Activated CD4-positive, alpha-beta memory T cell treated with anti-CD3 and anti-CD28 coated beads for 36 hours (primary cell): ENCODE measurements at regions of chr1 and their contacts with region 1.

Region 1: GRCh38 chr1:13730751-13731482 is 30.9 kb downstream of the PRDM2 start:
- DNase-seq: peak; percentile 92
- H3K4me3 Mint-ChIP-seq: peak overlapping the region; percentile 81
- H3K27ac Mint-ChIP-seq: peak overlapping the region; percentile 98
- H3K4me1 Mint-ChIP-seq: peaks cover 67% of the 10 kb centered on the region
- H3K27me3 Mint-ChIP-seq: no peaks in the 10 kb centered on the region

Region 2: DNA sequence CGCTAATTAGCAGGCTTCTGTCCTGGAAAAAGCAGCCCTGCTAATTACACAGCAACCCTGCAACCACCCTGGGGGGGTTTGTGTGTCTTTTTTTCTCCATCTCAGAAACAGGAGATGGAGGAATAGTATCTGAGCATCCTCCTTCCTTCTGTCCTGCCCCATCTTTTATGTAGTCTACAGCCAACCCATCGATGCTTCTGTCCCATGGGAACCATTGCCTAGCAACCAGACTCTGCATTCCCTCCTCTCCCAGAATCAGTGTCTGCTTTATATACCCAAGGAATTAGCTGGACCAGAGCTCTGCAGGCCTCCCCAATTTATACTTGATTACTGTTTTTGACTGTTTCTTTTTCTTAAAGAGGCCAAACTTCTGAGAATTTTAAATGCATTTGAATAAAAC is 252.2 kb before region 1 on chr1:
- CTCF ChIA-PET with region 1: no interaction called
- POLR2A ChIA-PET with region 1: no interaction called
- intact Hi-C with region 1: no loop called
- DNase-seq: no peak
- H3K4me3 Mint-ChIP-seq: no peak overlapping the region
- H3K27ac Mint-ChIP-seq: no peak overlapping the region
- H3K4me1 Mint-ChIP-seq: peaks cover 5% of the 10 kb centered on the region
- H3K27me3 Mint-ChIP-seq: peaks cover 5% of the 10 kb centered on the region

Region 3: GRCh38 chr1:13700521-13701270 is 30.2 kb before region 1 on chr1:
- CTCF ChIA-PET with region 1: interaction called, 28 read pairs
- POLR2A ChIA-PET with region 1: interaction called, 6 read pairs
- intact Hi-C with region 1: loop called (anchors 1 kb)
- DNase-seq: peak; percentile 54
- H3K4me3 Mint-ChIP-seq: peak overlapping the region; percentile 91
- H3K27ac Mint-ChIP-seq: peak overlapping the region; percentile 97
- H3K4me1 Mint-ChIP-seq: peaks cover 47% of the 10 kb centered on the region
- H3K27me3 Mint-ChIP-seq: no peaks in the 10 kb centered on the region

Region 4: GRCh38 chr1:13748610-13749505 is 17.9 kb after region 1 on chr1:
- CTCF ChIA-PET with region 1: interaction called, 11 read pairs
- POLR2A ChIA-PET with region 1: interaction called, 33 read pairs
- intact Hi-C with region 1: loop called (anchors 1 kb)
- DNase-seq: peak; percentile 96
- H3K4me3 Mint-ChIP-seq: peak overlapping the region; percentile 83
- H3K27ac Mint-ChIP-seq: peak overlapping the region; percentile 93
- H3K4me1 Mint-ChIP-seq: peaks cover 50% of the 10 kb centered on the region
- H3K27me3 Mint-ChIP-seq: no peaks in the 10 kb centered on the region

Region 5: DNA sequence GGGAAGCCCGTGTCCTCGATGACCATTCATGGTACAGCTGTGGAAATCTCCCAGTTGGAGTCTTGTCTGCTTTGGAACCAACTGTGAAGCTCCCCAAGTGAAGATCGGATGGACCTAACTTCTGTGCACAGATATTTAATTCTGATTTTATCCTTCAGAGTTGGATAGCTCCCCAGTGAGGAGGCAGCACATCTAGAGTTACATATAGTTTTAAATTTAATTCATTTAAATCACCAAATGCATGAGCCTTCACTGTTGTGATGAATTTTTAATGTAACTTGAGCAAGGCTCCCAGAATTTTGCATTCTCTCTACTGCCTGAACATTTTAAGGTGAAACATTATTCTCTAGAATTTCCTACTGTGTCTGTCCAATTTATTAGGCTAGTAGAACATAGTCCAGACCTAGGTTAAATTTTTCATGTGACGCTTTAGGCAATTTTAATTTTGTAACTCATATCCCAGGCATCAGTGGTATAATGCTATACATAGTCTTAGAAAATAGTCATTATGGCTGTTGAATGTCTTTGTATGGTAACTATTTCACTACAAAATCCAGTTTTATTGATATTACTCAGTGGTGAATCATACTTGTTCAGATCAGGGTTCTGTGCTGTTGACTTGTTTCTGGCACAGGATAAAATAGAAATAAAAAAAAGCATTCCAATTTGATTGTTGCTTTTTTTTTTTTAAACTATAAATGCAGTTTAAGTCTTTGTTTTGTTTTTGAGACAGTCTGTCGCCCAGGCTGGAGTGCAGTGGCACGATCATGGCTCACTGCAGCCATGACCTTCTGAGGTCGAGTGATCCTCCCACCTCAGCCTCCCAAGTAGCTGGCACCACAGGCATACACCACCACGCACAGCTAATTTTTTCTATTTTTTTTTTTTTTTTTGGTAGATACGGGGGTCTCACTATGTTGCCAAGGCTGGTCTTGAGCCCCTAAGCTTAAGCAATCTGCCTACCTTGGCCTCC is 36.0 kb after region 1 on chr1:
- CTCF ChIA-PET with region 1: interaction called, 3 read pairs
- POLR2A ChIA-PET with region 1: no interaction called
- intact Hi-C with region 1: loop called (anchors 2 kb)
- DNase-seq: no peak
- H3K4me3 Mint-ChIP-seq: no peak overlapping the region
- H3K27ac Mint-ChIP-seq: peak overlapping the region; percentile 61
- H3K4me1 Mint-ChIP-seq: peaks cover 71% of the 10 kb centered on the region
- H3K27me3 Mint-ChIP-seq: no peaks in the 10 kb centered on the region

Region 6: GRCh38 chr1:13792419-13792818 is 61.5 kb after region 1 on chr1:
- CTCF ChIA-PET with region 1: no interaction called
- POLR2A ChIA-PET with region 1: interaction called, 5 read pairs
- intact Hi-C with region 1: loop called (anchors 2 kb)
- DNase-seq: no peak
- H3K4me3 Mint-ChIP-seq: no peak overlapping the region
- H3K27ac Mint-ChIP-seq: no peak overlapping the region
- H3K4me1 Mint-ChIP-seq: peaks cover 70% of the 10 kb centered on the region
- H3K27me3 Mint-ChIP-seq: no peaks in the 10 kb centered on the region